ENCODE measurements at regions of chr20 and their contacts with region 1.

Region 1: GRCh38 chr20:37527638-37528441 is at the start of gene BLCAP:
- DNase-seq: peak; percentile 92 to 94
- ATAC-seq: peak; percentile 91 to 95 (median 94)
- H3K4me3 ChIP-seq: peak within 1 kb of the TSS; percentile 83 to 99 (median 93)
- H3K27ac ChIP-seq: peak within 1 kb of the TSS; percentile 90 to 99 (median 97)
- H3K4me1 ChIP-seq: peaks cover 21 to 47% (median 37%) of the 10 kb centered on the region in 9 donors
- H3K27me3 ChIP-seq: no peaks in the 10 kb centered on the region
- CTCF ChIP-seq: no peak
- total RNA-seq, gene BLCAP: 66.1 to 106 (median 84.1) TPM

Region 2: DNA sequence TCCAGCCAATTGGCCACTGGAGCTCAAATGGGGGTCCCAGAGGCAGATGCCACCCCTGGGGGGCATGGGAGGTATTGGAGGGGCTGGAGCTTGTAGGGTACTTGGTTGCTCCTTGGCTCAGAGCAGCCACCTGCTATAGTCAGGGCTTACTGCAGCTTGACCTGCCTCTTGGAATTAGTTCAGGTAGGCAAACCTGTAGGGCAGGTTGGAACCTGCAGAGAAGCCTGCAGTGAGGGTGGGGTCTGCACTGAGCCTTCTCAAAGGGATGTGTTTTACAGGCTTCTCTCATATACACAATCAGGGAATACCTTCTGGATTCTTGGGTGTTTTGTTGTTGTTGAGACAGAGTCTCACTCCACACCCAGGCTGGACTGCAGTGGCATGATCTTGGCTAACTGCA is 1080.7 kb before region 1 on chr20:
- intact Hi-C with region 1: no loop called
- DNase-seq: no peak
- ATAC-seq: no peak
- H3K4me3 ChIP-seq: no peak overlapping the region
- H3K27ac ChIP-seq: no peak overlapping the region
- H3K4me1 ChIP-seq: no peaks in the 10 kb centered on the region
- H3K27me3 ChIP-seq: no peaks in the 10 kb centered on the region
- CTCF ChIP-seq: no peak

Region 3: GRCh38 chr20:37288091-37288490 is 239.7 kb before region 1 on chr20:
- intact Hi-C with region 1: loop called in 3 of 10 experiments (anchors 5 kb)
- DNase-seq: no peak
- ATAC-seq: no peak
- H3K4me3 ChIP-seq: no peak overlapping the region
- H3K27ac ChIP-seq: no peak overlapping the region
- H3K4me1 ChIP-seq: peaks cover 6 to 28% (median 12%) of the 10 kb centered on the region in 9 donors
- H3K27me3 ChIP-seq: peaks cover 0 to 9% (median 0%) of the 10 kb centered on the region in 7 donors
- CTCF ChIP-seq: no peak

Region 4: DNA sequence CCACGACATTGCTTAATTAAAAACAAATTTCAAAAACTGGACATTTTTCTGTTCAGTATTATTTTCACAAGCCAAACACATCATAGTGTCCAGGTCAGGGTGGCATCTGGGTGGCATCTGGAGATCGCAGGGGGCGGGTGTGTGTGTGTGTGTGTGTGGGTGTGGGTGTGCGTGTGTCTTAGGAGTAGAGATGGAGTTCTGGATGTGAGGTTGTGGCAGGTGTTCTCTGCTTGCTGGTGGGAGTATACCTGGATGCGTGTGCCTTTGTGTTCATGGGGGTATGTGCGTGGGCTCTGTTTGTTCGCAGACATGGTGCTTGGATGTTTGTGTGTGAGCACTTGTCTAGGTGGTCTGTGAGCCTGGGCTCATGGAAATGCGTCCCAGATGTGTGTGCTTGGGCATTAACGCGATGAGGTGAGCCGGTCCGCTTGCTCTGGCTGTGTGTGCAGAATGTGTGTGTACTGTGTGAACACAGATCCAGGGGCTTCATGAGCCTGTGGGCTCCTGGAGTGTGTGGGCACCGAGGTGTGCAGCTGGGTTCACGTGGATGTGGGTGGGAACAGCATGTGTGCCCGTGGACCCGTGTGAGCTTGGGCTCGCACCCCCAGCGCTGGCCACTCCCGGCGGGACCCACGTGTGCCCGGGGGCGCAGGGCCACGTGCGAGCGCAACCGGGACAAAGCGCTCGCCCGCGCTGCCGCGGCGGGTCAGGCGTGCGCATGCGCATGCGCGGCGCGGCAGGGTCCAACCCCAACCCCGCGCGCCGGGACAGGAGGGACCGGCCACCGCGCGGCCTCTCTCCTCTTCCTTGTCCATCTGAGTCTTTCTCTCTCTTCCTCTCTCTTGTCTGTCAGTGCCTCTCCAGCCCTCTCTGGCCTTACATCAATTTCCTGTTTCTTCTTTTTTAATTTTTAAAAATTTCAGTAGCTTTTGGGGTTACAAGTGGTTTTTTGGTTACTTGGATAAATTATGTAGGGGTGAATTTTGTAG is 121.5 kb before region 1 on chr20:
- intact Hi-C with region 1: loop called in 1 of 10 experiments (anchors 5 kb)
- DNase-seq: peak in 1 of 2 donors; percentile 52
- ATAC-seq: peak in 6 of 8 donors; percentile 53 to 73 (median 64)
- H3K4me3 ChIP-seq: peak overlapping the region in 9 of 10 donors; percentile 21 to 44 (median 33)
- H3K27ac ChIP-seq: no peak overlapping the region
- H3K4me1 ChIP-seq: peaks cover 2 to 25% (median 15%) of the 10 kb centered on the region in 9 donors
- H3K27me3 ChIP-seq: peaks cover 0 to 45% (median 40%) of the 10 kb centered on the region in 7 donors
- CTCF ChIP-seq: no peak

Measured in heart right ventricle (tissue), 16 donors.